ENCODE measurements at regions of chr10 and their contacts with region 1.

Region 1: GRCh38 chr10:59245686-59246085 is 69.2 kb downstream of the PHYHIPL start:
- DNase-seq: no peak
- ATAC-seq: no peak
- H3K4me3 ChIP-seq: no peak overlapping the region
- H3K4me3 Mint-ChIP-seq: no peak overlapping the region
- H3K27ac ChIP-seq: no peak overlapping the region
- H3K27ac Mint-ChIP-seq: no peak overlapping the region
- H3K4me1 ChIP-seq: no peaks in the 10 kb centered on the region
- H3K4me1 Mint-ChIP-seq: no peaks in the 10 kb centered on the region
- H3K27me3 ChIP-seq: no peaks in the 10 kb centered on the region
- H3K27me3 Mint-ChIP-seq: peaks cover 2 to 3% of the 10 kb centered on the region in 2 donors

Region 2: GRCh38 chr10:59265141-59265540 is 19.5 kb after region 1 on chr10:
- CTCF ChIA-PET with region 1: no interaction called
- POLR2A ChIA-PET with region 1: interaction called, 3 to 10 read pairs
- DNase-seq: no peak
- ATAC-seq: no peak
- H3K4me3 ChIP-seq: no peak overlapping the region
- H3K4me3 Mint-ChIP-seq: no peak overlapping the region
- H3K27ac ChIP-seq: no peak overlapping the region
- H3K27ac Mint-ChIP-seq: no peak overlapping the region
- H3K4me1 ChIP-seq: no peaks in the 10 kb centered on the region
- H3K4me1 Mint-ChIP-seq: no peaks in the 10 kb centered on the region
- H3K27me3 ChIP-seq: no peaks in the 10 kb centered on the region
- H3K27me3 Mint-ChIP-seq: no peaks in the 10 kb centered on the region

Region 3: DNA sequence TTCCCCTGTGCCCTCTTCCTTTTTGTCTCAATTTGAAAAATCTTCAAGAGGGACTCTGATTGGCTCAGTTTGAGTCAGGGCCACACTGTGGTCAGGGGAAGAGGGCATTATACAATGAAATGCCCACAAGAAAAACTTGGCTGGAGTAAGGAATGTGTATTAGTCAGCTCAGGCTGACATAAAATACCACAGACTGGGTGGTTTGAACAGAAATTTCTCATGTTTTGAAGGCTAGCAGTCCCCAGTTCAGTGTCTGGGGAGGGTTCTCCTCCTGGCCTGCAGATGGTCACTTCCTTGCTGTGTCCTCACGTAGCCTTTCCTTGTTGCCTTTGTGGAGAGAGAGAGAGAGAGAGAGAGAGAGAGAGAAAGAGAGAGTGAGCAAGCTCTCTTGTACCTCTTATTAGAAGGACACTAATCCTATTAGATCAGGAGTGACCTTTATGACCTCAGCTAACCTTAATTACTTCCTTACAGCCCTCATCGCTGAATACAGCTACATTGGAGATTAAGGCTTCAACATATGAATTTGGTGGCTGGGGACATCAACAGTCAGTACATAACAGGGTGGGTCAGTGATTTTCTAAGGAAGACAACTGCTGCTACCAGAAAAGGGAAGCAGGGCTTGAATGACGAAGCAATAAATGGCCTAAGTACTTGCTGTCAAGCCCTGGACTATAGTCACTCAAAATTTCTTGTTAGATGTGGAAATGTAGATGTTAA is 142.4 kb after region 1 on chr10:
- CTCF ChIA-PET with region 1: no interaction called
- POLR2A ChIA-PET with region 1: no interaction called
- DNase-seq: no peak
- ATAC-seq: no peak
- H3K4me3 ChIP-seq: no peak overlapping the region
- H3K4me3 Mint-ChIP-seq: no peak overlapping the region
- H3K27ac ChIP-seq: no peak overlapping the region
- H3K27ac Mint-ChIP-seq: no peak overlapping the region
- H3K4me1 ChIP-seq: no peaks in the 10 kb centered on the region
- H3K4me1 Mint-ChIP-seq: no peaks in the 10 kb centered on the region
- H3K27me3 ChIP-seq: no peaks in the 10 kb centered on the region
- H3K27me3 Mint-ChIP-seq: no peaks in the 10 kb centered on the region

Region 4: DNA sequence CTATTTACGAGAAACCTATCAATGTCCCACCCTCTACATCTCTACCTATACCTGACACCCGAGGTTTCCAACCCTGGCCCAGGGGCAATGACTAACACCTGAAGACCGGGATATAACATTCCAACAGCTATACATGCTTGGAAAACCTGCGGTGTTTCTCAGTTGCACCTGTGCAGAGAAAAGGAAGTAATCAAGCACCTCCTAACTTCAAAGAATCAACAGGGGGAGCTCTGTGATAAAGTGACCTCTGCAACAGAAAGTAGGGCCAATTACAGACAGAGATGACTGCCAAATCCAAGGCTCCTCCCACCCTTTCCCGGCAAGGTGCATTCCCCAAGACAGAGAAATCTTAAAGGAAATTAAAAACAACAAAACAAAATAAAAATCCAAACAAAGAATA is 619.4 kb after region 1 on chr10:
- CTCF ChIA-PET with region 1: no interaction called
- POLR2A ChIA-PET with region 1: no interaction called
- DNase-seq: peak in 1 of 35 experiments; percentile 54
- ATAC-seq: peak in 3 of 4 experiments; percentile 23 to 69 (median 65)
- H3K4me3 ChIP-seq: peak overlapping the region in 1 of 2 donors; percentile 10
- H3K4me3 Mint-ChIP-seq: peak overlapping the region in 2 of 3 donors; percentile 29 to 60
- H3K27ac ChIP-seq: no peak overlapping the region
- H3K27ac Mint-ChIP-seq: peak overlapping the region; percentile 7 to 80
- H3K4me1 ChIP-seq: peaks cover 17% of the 10 kb centered on the region in 2 experiments
- H3K4me1 Mint-ChIP-seq: peaks cover 65 to 79% (median 69%) of the 10 kb centered on the region in 3 donors
- H3K27me3 ChIP-seq: no peaks in the 10 kb centered on the region
- H3K27me3 Mint-ChIP-seq: no peaks in the 10 kb centered on the region

Measured in T-cell (primary cell).